Activated naive CD4-positive, alpha-beta T cell treated with anti-CD3 and anti-CD28 coated beads for 36 hours (primary cell): ENCODE measurements at regions of chr3 and their contacts with region 1.

Region 1: GRCh38 chr3:189529468-189529867 is 101.7 kb upstream of the TP63 start:
- DNase-seq: no peak
- H3K4me3 Mint-ChIP-seq: no peak overlapping the region
- H3K27ac Mint-ChIP-seq: peak overlapping the region; percentile 74
- H3K4me1 Mint-ChIP-seq: peaks cover 46% of the 10 kb centered on the region
- H3K27me3 Mint-ChIP-seq: no peaks in the 10 kb centered on the region

Region 2: GRCh38 chr3:188807006-188807405 is 722.5 kb before region 1 on chr3:
- CTCF ChIA-PET with region 1: no interaction called
- intact Hi-C with region 1: no loop called
- DNase-seq: no peak
- H3K4me3 Mint-ChIP-seq: no peak overlapping the region
- H3K27ac Mint-ChIP-seq: no peak overlapping the region
- H3K4me1 Mint-ChIP-seq: no peaks in the 10 kb centered on the region
- H3K27me3 Mint-ChIP-seq: no peaks in the 10 kb centered on the region

Region 3: GRCh38 chr3:189276481-189277219 is 252.8 kb before region 1 on chr3:
- CTCF ChIA-PET with region 1: interaction called, 3 read pairs
- intact Hi-C with region 1: loop called (anchors 1 kb)
- DNase-seq: no peak
- H3K4me3 Mint-ChIP-seq: no peak overlapping the region
- H3K27ac Mint-ChIP-seq: no peak overlapping the region
- H3K4me1 Mint-ChIP-seq: peaks cover 35% of the 10 kb centered on the region
- H3K27me3 Mint-ChIP-seq: no peaks in the 10 kb centered on the region

Region 4: GRCh38 chr3:189324538-189325138 is 204.8 kb before region 1 on chr3:
- CTCF ChIA-PET with region 1: no interaction called
- intact Hi-C with region 1: loop called (anchors 1 kb)
- DNase-seq: peak; percentile 95
- H3K4me3 Mint-ChIP-seq: peak overlapping the region; percentile 36
- H3K27ac Mint-ChIP-seq: peak overlapping the region; percentile 88
- H3K4me1 Mint-ChIP-seq: peaks cover 56% of the 10 kb centered on the region
- H3K27me3 Mint-ChIP-seq: no peaks in the 10 kb centered on the region

Region 5: DNA sequence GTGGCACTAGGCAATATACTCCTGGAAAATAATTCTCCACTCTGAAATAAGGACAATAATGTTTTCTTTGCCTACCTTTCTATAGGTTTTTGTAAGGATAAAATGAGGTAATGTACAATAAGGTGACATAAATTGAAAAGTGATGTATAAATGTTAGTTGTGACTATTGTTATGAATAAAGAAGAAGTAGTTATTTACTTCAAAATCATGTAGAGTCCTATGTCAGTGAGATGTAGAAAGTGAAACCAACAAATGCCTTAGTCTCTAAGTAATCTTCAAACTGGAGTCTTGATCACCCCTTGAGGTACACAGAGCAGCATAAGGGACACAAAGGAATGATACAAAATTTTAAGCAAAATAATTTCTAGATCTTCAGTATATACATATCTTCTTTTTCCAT is 41.4 kb after region 1 on chr3:
- CTCF ChIA-PET with region 1: no interaction called
- intact Hi-C with region 1: loop called (anchors 1 kb)
- DNase-seq: no peak
- H3K4me3 Mint-ChIP-seq: no peak overlapping the region
- H3K27ac Mint-ChIP-seq: no peak overlapping the region
- H3K4me1 Mint-ChIP-seq: peaks cover 30% of the 10 kb centered on the region
- H3K27me3 Mint-ChIP-seq: no peaks in the 10 kb centered on the region

Region 6: GRCh38 chr3:189710620-189711402 is 181.3 kb after region 1 on chr3:
- CTCF ChIA-PET with region 1: no interaction called
- intact Hi-C with region 1: loop called (anchors 5 kb)
- DNase-seq: peak; percentile 44
- H3K4me3 Mint-ChIP-seq: no peak overlapping the region
- H3K27ac Mint-ChIP-seq: no peak overlapping the region
- H3K4me1 Mint-ChIP-seq: peaks cover 20% of the 10 kb centered on the region
- H3K27me3 Mint-ChIP-seq: no peaks in the 10 kb centered on the region

Region 7: GRCh38 chr3:190566043-190566933 is 1036.8 kb after region 1 on chr3:
- CTCF ChIA-PET with region 1: interaction called, 5 read pairs
- intact Hi-C with region 1: loop called (anchors 5 kb)
- DNase-seq: peak; percentile 94
- H3K4me3 Mint-ChIP-seq: no peak overlapping the region
- H3K27ac Mint-ChIP-seq: peak overlapping the region; percentile 93
- H3K4me1 Mint-ChIP-seq: peaks cover 38% of the 10 kb centered on the region
- H3K27me3 Mint-ChIP-seq: no peaks in the 10 kb centered on the region